ENCODE measurements at regions of chr9 and their contacts with region 1.

Region 1: DNA sequence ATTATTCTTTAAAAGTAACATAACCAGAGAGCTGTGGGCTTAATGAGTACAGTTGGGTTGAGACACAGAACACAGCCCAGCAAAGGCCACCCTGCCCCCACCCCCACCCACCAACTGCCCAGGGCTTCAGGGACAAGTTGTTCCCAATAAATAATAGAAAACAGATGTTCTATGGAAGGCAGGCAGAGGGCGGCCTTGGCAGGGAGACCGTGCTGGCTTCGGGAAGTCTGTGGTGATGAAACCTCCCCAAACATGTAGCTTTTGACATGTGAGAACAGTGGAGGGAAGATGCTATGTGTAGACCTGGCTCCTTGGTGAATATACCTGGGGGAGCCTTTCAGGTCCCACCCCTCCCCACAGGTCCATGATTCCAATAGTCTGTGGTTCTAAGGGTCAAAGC is 10.0 kb downstream of the TRAF1 start:
- DNase-seq: no peak
- ATAC-seq: no peak
- H3K4me3 ChIP-seq: no peak overlapping the region
- H3K27ac ChIP-seq: peak overlapping the region in 1 of 2 experiments; percentile 36; a peak in 1 of 6 replicates
- H3K4me1 ChIP-seq: peaks cover 3% of the 10 kb centered on the region; the same call in 1 of the 3 replicates
- CTCF ChIP-seq: no peak
- EP300 ChIP-seq: no peak
- POLR2A ChIP-seq: no peak
- RAD21 ChIP-seq: 0 out of 5 replicates have a peak, but pooled peaks of 1 of the 2 experiments have one; percentile 15

Region 2: GRCh38 chr9:120928483-120929228 is 12.1 kb after region 1 on chr9:
- CTCF ChIA-PET with region 1: interaction called, 66 read pairs
- POLR2A ChIA-PET with region 1: interaction called, 7 read pairs
- DNase-seq: peak; percentile 57 to 78
- ATAC-seq: peak; percentile 85 to 93
- H3K4me3 ChIP-seq: peak overlapping the region; percentile 77
- H3K27ac ChIP-seq: peak overlapping the region; percentile 89 to 97
- H3K4me1 ChIP-seq: peaks cover 26% of the 10 kb centered on the region
- CTCF ChIP-seq: no peak
- EP300 ChIP-seq: no peak
- POLR2A ChIP-seq: peak; percentile 73
- RAD21 ChIP-seq: 0 out of 5 replicates have a peak, but pooled peaks of 1 of the 2 experiments have one; percentile 10

Measured in A549 (cell line).